CD4-positive, alpha-beta memory T cell (primary cell): ENCODE measurements at regions of chrX and their contacts with region 1.

Region 1: GRCh38 chrX:136694431-136695087 is 46.6 kb downstream of the CD40LG start:
- DNase-seq: peak; percentile 64 to 74 (median 65)
- H3K4me3 ChIP-seq: peak overlapping the region in 1 of 2 donors; percentile 27
- H3K4me3 Mint-ChIP-seq: peak overlapping the region; percentile 74 to 93 (median 84)
- H3K27ac ChIP-seq: peak overlapping the region; percentile 83
- H3K27ac Mint-ChIP-seq: peak overlapping the region; percentile 94 to 100 (median 98)
- H3K4me1 ChIP-seq: peaks cover 81% of the 10 kb centered on the region
- H3K4me1 Mint-ChIP-seq: peaks cover 37 to 80% (median 59%) of the 10 kb centered on the region in 4 donors
- H3K27me3 ChIP-seq: no peaks in the 10 kb centered on the region
- H3K27me3 Mint-ChIP-seq: no peaks in the 10 kb centered on the region

Region 2: GRCh38 chrX:136176399-136176825 is 518.1 kb before region 1 on chrX:
- CTCF ChIA-PET with region 1: no interaction called
- POLR2A ChIA-PET with region 1: no interaction called
- intact Hi-C with region 1: no loop called
- DNase-seq: no peak
- H3K4me3 ChIP-seq: no peak overlapping the region
- H3K4me3 Mint-ChIP-seq: no peak overlapping the region
- H3K27ac ChIP-seq: no peak overlapping the region
- H3K27ac Mint-ChIP-seq: peak overlapping the region in 1 of 7 donors; percentile 57
- H3K4me1 ChIP-seq: no peaks in the 10 kb centered on the region
- H3K4me1 Mint-ChIP-seq: no peaks in the 10 kb centered on the region
- H3K27me3 ChIP-seq: no peaks in the 10 kb centered on the region
- H3K27me3 Mint-ChIP-seq: no peaks in the 10 kb centered on the region

Region 3: DNA sequence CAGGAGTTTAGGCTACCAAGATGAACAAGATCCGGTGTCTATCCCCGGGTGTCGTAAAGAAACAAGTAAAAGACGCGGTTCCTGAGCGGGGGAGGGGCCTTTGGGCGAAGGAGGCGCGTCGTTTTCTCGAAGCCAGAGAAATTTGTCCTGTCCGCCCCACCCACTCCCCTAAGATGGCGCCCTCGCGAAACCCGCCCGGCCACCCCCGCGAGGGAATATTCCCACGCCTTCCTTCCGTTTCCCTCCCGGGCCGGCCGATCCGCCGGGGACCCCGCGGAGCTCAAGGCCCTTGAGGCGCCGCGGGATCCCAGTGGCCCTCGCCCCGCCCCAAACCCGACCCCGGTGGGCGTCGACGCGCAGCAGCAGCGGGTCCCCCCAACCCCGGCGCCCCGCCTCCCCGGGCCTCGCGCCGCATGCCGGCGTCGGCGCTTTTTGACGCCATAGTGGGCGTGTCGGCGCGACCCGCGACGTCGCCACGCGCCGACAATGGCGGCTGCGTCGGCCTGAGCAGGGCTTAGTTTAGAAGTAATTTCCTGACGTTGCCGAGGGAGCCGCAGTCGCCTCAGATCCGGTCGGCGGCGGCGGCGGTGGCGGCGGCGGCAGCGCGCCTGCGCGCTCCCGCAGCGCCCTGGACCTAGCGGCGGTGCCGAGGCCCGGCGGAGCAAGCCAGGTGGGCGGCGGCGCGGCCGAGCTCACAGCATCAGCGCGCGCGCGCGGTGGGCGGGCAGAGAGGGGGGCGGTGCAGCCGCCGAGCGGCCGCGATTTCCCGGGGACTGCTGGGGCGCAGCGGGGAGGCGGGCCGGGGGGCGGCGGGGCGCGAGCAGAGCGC is 197.6 kb before region 1 on chrX and contains the start of gene HTATSF1:
- CTCF ChIA-PET with region 1: interaction called, 3 read pairs
- POLR2A ChIA-PET with region 1: interaction called, 6 read pairs
- intact Hi-C with region 1: loop called (anchors 2 kb)
- DNase-seq: peak; percentile 88 to 94 (median 91)
- H3K4me3 ChIP-seq: peak within 1 kb of the TSS; percentile 83
- H3K4me3 Mint-ChIP-seq: peak within 1 kb of the TSS; percentile 88 to 95 (median 91)
- H3K27ac ChIP-seq: peak within 1 kb of the TSS; percentile 73
- H3K27ac Mint-ChIP-seq: peak within 1 kb of the TSS; percentile 93 to 99 (median 98)
- H3K4me1 ChIP-seq: peaks cover 23% of the 10 kb centered on the region
- H3K4me1 Mint-ChIP-seq: peaks cover 6 to 31% (median 17%) of the 10 kb centered on the region in 4 donors
- H3K27me3 ChIP-seq: no peaks in the 10 kb centered on the region
- H3K27me3 Mint-ChIP-seq: peaks cover 0 to 1% of the 10 kb centered on the region in 2 donors
- total RNA-seq, gene HTATSF1: 31.6 to 34.7 TPM

Region 4: GRCh38 chrX:136608295-136609171 is 86.0 kb before region 1 on chrX:
- CTCF ChIA-PET with region 1: interaction called, 126 read pairs
- POLR2A ChIA-PET with region 1: interaction called, 65 read pairs
- intact Hi-C with region 1: loop called (anchors 1 kb)
- DNase-seq: peak; percentile 63 to 71 (median 68)
- H3K4me3 ChIP-seq: peak overlapping the region in 1 of 2 donors; percentile 19
- H3K4me3 Mint-ChIP-seq: peak overlapping the region; percentile 55 to 77 (median 67)
- H3K27ac ChIP-seq: peak overlapping the region; percentile 37
- H3K27ac Mint-ChIP-seq: peak overlapping the region; percentile 82 to 94 (median 87)
- H3K4me1 ChIP-seq: peaks cover 46% of the 10 kb centered on the region
- H3K4me1 Mint-ChIP-seq: peaks cover 21 to 58% (median 42%) of the 10 kb centered on the region in 4 donors
- H3K27me3 ChIP-seq: no peaks in the 10 kb centered on the region
- H3K27me3 Mint-ChIP-seq: no peaks in the 10 kb centered on the region

Region 5: DNA sequence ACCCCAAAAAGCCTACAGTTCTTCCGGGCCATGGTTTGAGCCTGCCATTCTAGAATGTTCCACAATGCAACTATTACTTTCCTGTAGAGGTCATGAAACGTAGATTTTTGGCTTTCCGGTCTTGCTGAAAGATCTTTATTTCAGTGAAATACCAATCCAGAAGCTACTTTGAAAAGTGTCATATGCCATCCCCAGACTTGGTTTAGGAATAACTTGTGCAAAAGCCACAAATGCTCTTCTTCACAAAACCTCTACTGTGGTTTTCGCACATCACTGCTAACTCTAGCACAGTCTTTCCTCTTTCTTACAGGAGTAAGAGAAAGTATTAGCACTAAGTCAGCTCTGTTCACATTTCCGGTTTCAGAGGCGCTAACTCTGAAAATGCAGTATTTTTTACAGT is 59.3 kb before region 1 on chrX:
- CTCF ChIA-PET with region 1: interaction called, 3 read pairs
- POLR2A ChIA-PET with region 1: interaction called, 13 read pairs
- intact Hi-C with region 1: no loop called
- DNase-seq: peak; percentile 56 to 68 (median 62)
- H3K4me3 ChIP-seq: peak overlapping the region in 1 of 2 donors; percentile 47
- H3K4me3 Mint-ChIP-seq: peak overlapping the region; percentile 51 to 88 (median 82)
- H3K27ac ChIP-seq: peak overlapping the region; percentile 56
- H3K27ac Mint-ChIP-seq: peak overlapping the region; percentile 78 to 96 (median 94)
- H3K4me1 ChIP-seq: peaks cover 97% of the 10 kb centered on the region
- H3K4me1 Mint-ChIP-seq: peaks cover 52 to 94% (median 73%) of the 10 kb centered on the region in 4 donors
- H3K27me3 ChIP-seq: no peaks in the 10 kb centered on the region
- H3K27me3 Mint-ChIP-seq: no peaks in the 10 kb centered on the region

Region 6: GRCh38 chrX:136658151-136658550 is 36.4 kb before region 1 on chrX:
- CTCF ChIA-PET with region 1: interaction called, 25 read pairs
- POLR2A ChIA-PET with region 1: interaction called, 77 read pairs
- intact Hi-C with region 1: loop called (anchors 2 kb)
- DNase-seq: peak in 1 of 5 donors; percentile 41
- H3K4me3 ChIP-seq: peak overlapping the region in 1 of 2 donors; percentile 23
- H3K4me3 Mint-ChIP-seq: peak overlapping the region; percentile 81 to 99 (median 97)
- H3K27ac ChIP-seq: peak overlapping the region; percentile 60
- H3K27ac Mint-ChIP-seq: peak overlapping the region; percentile 84 to 94 (median 92)
- H3K4me1 ChIP-seq: peaks cover 99% of the 10 kb centered on the region
- H3K4me1 Mint-ChIP-seq: peaks cover 57 to 99% (median 70%) of the 10 kb centered on the region in 4 donors
- H3K27me3 ChIP-seq: no peaks in the 10 kb centered on the region
- H3K27me3 Mint-ChIP-seq: no peaks in the 10 kb centered on the region

Region 7: DNA sequence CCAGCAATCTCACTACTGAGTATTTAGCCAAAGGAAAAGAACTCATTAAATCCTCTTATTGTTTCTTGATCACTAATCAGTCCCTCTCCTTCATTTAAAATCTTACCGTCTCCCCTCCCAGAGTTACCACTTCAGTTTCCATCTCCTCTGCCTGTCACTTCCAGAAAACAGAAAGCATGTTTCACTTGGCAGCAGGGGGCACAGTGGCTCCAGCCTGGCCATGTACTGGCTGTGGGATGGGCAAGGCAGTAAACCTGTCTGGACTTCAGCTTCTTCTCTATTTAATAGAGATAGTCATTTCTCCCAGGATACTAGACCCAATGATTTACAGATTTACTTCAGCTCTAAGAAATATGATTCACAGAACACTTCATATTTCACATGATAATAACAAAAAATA is 16.6 kb after region 1 on chrX:
- CTCF ChIA-PET with region 1: interaction called, 28 read pairs
- POLR2A ChIA-PET with region 1: interaction called, 4 read pairs
- intact Hi-C with region 1: no loop called
- DNase-seq: no peak
- H3K4me3 ChIP-seq: no peak overlapping the region
- H3K4me3 Mint-ChIP-seq: peak overlapping the region in 3 of 8 donors; percentile 1 to 69 (median 3)
- H3K27ac ChIP-seq: peak overlapping the region; percentile 56
- H3K27ac Mint-ChIP-seq: peak overlapping the region; percentile 81 to 98 (median 92)
- H3K4me1 ChIP-seq: peaks cover 56% of the 10 kb centered on the region
- H3K4me1 Mint-ChIP-seq: peaks cover 26 to 51% (median 36%) of the 10 kb centered on the region in 4 donors
- H3K27me3 ChIP-seq: no peaks in the 10 kb centered on the region
- H3K27me3 Mint-ChIP-seq: no peaks in the 10 kb centered on the region

Region 8: DNA sequence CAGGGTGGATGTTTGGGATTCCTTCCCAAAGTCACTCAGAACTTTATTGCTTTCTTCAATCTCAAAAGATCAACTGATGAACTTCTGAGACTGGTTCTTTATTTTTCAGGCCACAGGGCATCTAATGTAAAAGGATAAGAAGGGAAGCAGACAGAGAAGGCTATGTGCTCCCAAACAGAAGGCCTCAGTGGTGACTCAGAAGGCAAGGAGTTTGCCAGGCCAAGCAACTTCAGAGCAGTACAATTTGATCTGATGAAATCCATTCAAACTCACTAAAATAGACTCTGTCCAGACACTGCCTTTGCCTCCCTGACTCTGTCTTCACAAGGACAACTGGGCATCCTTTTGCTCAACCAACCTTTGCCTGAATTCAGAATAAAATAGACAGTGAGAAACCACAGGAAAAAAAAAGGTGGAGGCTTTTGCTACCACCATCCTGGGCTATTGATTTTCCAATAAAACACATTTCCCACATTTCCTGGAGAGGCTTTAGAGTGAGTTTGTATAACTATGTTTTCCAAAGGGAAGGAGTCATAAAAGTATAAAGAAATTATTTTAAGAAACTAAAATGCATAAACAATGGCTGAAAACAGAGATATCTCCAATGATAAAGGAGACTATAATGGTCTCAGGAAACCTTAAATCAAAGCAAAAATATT is 31.0 kb after region 1 on chrX:
- CTCF ChIA-PET with region 1: no interaction called
- POLR2A ChIA-PET with region 1: no interaction called
- intact Hi-C with region 1: no loop called
- DNase-seq: no peak
- H3K4me3 ChIP-seq: no peak overlapping the region
- H3K4me3 Mint-ChIP-seq: no peak overlapping the region
- H3K27ac ChIP-seq: no peak overlapping the region
- H3K27ac Mint-ChIP-seq: peak overlapping the region in 2 of 7 donors; percentile 29 to 53
- H3K4me1 ChIP-seq: peaks cover 22% of the 10 kb centered on the region
- H3K4me1 Mint-ChIP-seq: peaks cover 10 to 18% (median 17%) of the 10 kb centered on the region in 4 donors
- H3K27me3 ChIP-seq: no peaks in the 10 kb centered on the region
- H3K27me3 Mint-ChIP-seq: no peaks in the 10 kb centered on the region